ENCODE measurements at regions of chr15 and their contacts with region 1.

Region 1: GRCh38 chr15:70670680-70671079 is 92.7 kb downstream of the UACA start:
- DNase-seq: peak in 2 of 9 experiments; percentile 27 to 45
- ATAC-seq: no peak
- H3K4me3 ChIP-seq: no peak overlapping the region
- H3K4me3 Mint-ChIP-seq: no peak overlapping the region
- H3K27ac ChIP-seq: no peak overlapping the region
- H3K27ac Mint-ChIP-seq: no peak overlapping the region
- H3K4me1 ChIP-seq: peaks cover 30% of the 10 kb centered on the region
- H3K4me1 Mint-ChIP-seq: peaks cover 24% of the 10 kb centered on the region
- H3K27me3 ChIP-seq: no peaks in the 10 kb centered on the region
- H3K27me3 Mint-ChIP-seq: peaks cover 2% of the 10 kb centered on the region
- CTCF ChIP-seq: peak; percentile 42

Region 2: GRCh38 chr15:69755551-69756310 is 914.9 kb before region 1 on chr15:
- CTCF ChIA-PET with region 1: no interaction called
- POLR2A ChIA-PET with region 1: no interaction called
- intact Hi-C with region 1: loop called in 1 of 2 experiments (anchors 5 kb)
- DNase-seq: peak; percentile 16 to 89 (median 77)
- ATAC-seq: peak; percentile 70
- H3K4me3 ChIP-seq: peak overlapping the region; percentile 4 to 5
- H3K4me3 Mint-ChIP-seq: peak overlapping the region; percentile 58
- H3K27ac ChIP-seq: no peak overlapping the region
- H3K27ac Mint-ChIP-seq: peak overlapping the region; percentile 86
- H3K4me1 ChIP-seq: peaks cover 72% of the 10 kb centered on the region
- H3K4me1 Mint-ChIP-seq: peaks cover 75% of the 10 kb centered on the region
- H3K27me3 ChIP-seq: peaks cover 0 to 3% of the 10 kb centered on the region in 2 experiments
- H3K27me3 Mint-ChIP-seq: peaks cover 7% of the 10 kb centered on the region
- CTCF ChIP-seq: no peak

Region 3: DNA sequence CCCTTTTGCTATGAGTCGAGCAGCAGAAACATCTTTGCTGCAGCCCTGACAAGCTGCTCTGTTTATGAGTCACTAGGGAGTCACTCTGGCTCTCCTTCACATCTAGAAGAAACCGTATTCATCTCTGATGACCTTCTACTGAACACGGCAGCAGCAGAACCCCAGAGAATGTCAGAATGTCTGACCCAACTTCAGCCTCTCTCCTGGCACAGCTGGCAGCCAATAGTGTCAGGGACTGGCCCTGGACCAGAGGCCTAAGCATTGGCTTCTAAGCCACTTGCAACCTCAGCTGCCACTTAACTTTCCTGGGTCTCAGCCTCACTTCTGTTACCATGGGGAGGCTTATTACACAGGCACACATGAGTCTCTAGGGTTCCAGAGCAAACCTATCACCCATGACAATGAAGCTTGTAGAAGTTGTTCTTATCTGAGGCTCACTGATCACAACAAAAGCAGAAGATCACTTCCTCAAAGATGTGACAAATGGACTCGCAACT is 388.8 kb before region 1 on chr15:
- CTCF ChIA-PET with region 1: no interaction called
- POLR2A ChIA-PET with region 1: no interaction called
- intact Hi-C with region 1: no loop called
- DNase-seq: no peak
- ATAC-seq: no peak
- H3K4me3 ChIP-seq: no peak overlapping the region
- H3K4me3 Mint-ChIP-seq: no peak overlapping the region
- H3K27ac ChIP-seq: no peak overlapping the region
- H3K27ac Mint-ChIP-seq: no peak overlapping the region
- H3K4me1 ChIP-seq: no peaks in the 10 kb centered on the region
- H3K4me1 Mint-ChIP-seq: no peaks in the 10 kb centered on the region
- H3K27me3 ChIP-seq: no peaks in the 10 kb centered on the region
- H3K27me3 Mint-ChIP-seq: no peaks in the 10 kb centered on the region
- CTCF ChIP-seq: no peak

Region 4: GRCh38 chr15:70545526-70545925 is 125.2 kb before region 1 on chr15:
- CTCF ChIA-PET with region 1: no interaction called
- POLR2A ChIA-PET with region 1: no interaction called
- intact Hi-C with region 1: no loop called
- DNase-seq: peak in 1 of 9 experiments; percentile 36
- ATAC-seq: no peak
- H3K4me3 ChIP-seq: no peak overlapping the region
- H3K4me3 Mint-ChIP-seq: no peak overlapping the region
- H3K27ac ChIP-seq: no peak overlapping the region
- H3K27ac Mint-ChIP-seq: no peak overlapping the region
- H3K4me1 ChIP-seq: no peaks in the 10 kb centered on the region
- H3K4me1 Mint-ChIP-seq: peaks cover 30% of the 10 kb centered on the region
- H3K27me3 ChIP-seq: no peaks in the 10 kb centered on the region
- H3K27me3 Mint-ChIP-seq: no peaks in the 10 kb centered on the region
- CTCF ChIP-seq: no peak

Region 5: GRCh38 chr15:70636540-70637165 is 34.0 kb before region 1 on chr15:
- CTCF ChIA-PET with region 1: no interaction called
- POLR2A ChIA-PET with region 1: no interaction called
- intact Hi-C with region 1: no loop called
- DNase-seq: peak in 1 of 9 experiments; percentile 8
- ATAC-seq: no peak
- H3K4me3 ChIP-seq: no peak overlapping the region
- H3K4me3 Mint-ChIP-seq: no peak overlapping the region
- H3K27ac ChIP-seq: no peak overlapping the region
- H3K27ac Mint-ChIP-seq: no peak overlapping the region
- H3K4me1 ChIP-seq: no peaks in the 10 kb centered on the region
- H3K4me1 Mint-ChIP-seq: peaks cover 13% of the 10 kb centered on the region
- H3K27me3 ChIP-seq: no peaks in the 10 kb centered on the region
- H3K27me3 Mint-ChIP-seq: peaks cover 24% of the 10 kb centered on the region
- CTCF ChIP-seq: no peak

Region 6: GRCh38 chr15:70650567-70651302 is 19.9 kb before region 1 on chr15:
- CTCF ChIA-PET with region 1: no interaction called
- POLR2A ChIA-PET with region 1: no interaction called
- intact Hi-C with region 1: no loop called
- DNase-seq: no peak
- ATAC-seq: no peak
- H3K4me3 ChIP-seq: no peak overlapping the region
- H3K4me3 Mint-ChIP-seq: no peak overlapping the region
- H3K27ac ChIP-seq: no peak overlapping the region
- H3K27ac Mint-ChIP-seq: no peak overlapping the region
- H3K4me1 ChIP-seq: no peaks in the 10 kb centered on the region
- H3K4me1 Mint-ChIP-seq: no peaks in the 10 kb centered on the region
- H3K27me3 ChIP-seq: no peaks in the 10 kb centered on the region
- H3K27me3 Mint-ChIP-seq: peaks cover 2% of the 10 kb centered on the region
- CTCF ChIP-seq: no peak

Region 7: GRCh38 chr15:70722266-70723121 is 51.8 kb after region 1 on chr15:
- CTCF ChIA-PET with region 1: interaction called, 36 read pairs
- POLR2A ChIA-PET with region 1: interaction called, 3 read pairs
- intact Hi-C with region 1: loop called (anchors 10 kb)
- DNase-seq: peak in 2 of 9 experiments; percentile 57 to 70
- ATAC-seq: no peak
- H3K4me3 ChIP-seq: no peak overlapping the region
- H3K4me3 Mint-ChIP-seq: no peak overlapping the region
- H3K27ac ChIP-seq: no peak overlapping the region
- H3K27ac Mint-ChIP-seq: no peak overlapping the region
- H3K4me1 ChIP-seq: no peaks in the 10 kb centered on the region
- H3K4me1 Mint-ChIP-seq: no peaks in the 10 kb centered on the region
- H3K27me3 ChIP-seq: no peaks in the 10 kb centered on the region
- H3K27me3 Mint-ChIP-seq: peaks cover 11% of the 10 kb centered on the region
- CTCF ChIP-seq: peak; percentile 90

Region 8: GRCh38 chr15:70810916-70811578 is 140.4 kb after region 1 on chr15:
- CTCF ChIA-PET with region 1: interaction called, 18 read pairs
- POLR2A ChIA-PET with region 1: no interaction called
- intact Hi-C with region 1: loop called (anchors 2 kb)
- DNase-seq: no peak
- ATAC-seq: no peak
- H3K4me3 ChIP-seq: no peak overlapping the region
- H3K4me3 Mint-ChIP-seq: no peak overlapping the region
- H3K27ac ChIP-seq: no peak overlapping the region
- H3K27ac Mint-ChIP-seq: no peak overlapping the region
- H3K4me1 ChIP-seq: no peaks in the 10 kb centered on the region
- H3K4me1 Mint-ChIP-seq: peaks cover 4% of the 10 kb centered on the region
- H3K27me3 ChIP-seq: no peaks in the 10 kb centered on the region
- H3K27me3 Mint-ChIP-seq: peaks cover 10% of the 10 kb centered on the region
- CTCF ChIP-seq: no peak

Region 9: GRCh38 chr15:71443538-71443937 is 772.9 kb after region 1 on chr15:
- CTCF ChIA-PET with region 1: no interaction called
- POLR2A ChIA-PET with region 1: no interaction called
- intact Hi-C with region 1: loop called in 1 of 2 experiments (anchors 5 kb)
- DNase-seq: peak in 5 of 9 experiments; percentile 7 to 28 (median 22)
- ATAC-seq: no peak
- H3K4me3 ChIP-seq: no peak overlapping the region
- H3K4me3 Mint-ChIP-seq: no peak overlapping the region
- H3K27ac ChIP-seq: no peak overlapping the region
- H3K27ac Mint-ChIP-seq: no peak overlapping the region
- H3K4me1 ChIP-seq: no peaks in the 10 kb centered on the region
- H3K4me1 Mint-ChIP-seq: no peaks in the 10 kb centered on the region
- H3K27me3 ChIP-seq: no peaks in the 10 kb centered on the region
- H3K27me3 Mint-ChIP-seq: peaks cover 8% of the 10 kb centered on the region
- CTCF ChIP-seq: peak; percentile 73

Measured in CD8-positive, alpha-beta T cell (primary cell).